CD4-positive, alpha-beta memory T cell (primary cell): ENCODE measurements at regions of chr17 and their contacts with region 1.

Region 1: DNA sequence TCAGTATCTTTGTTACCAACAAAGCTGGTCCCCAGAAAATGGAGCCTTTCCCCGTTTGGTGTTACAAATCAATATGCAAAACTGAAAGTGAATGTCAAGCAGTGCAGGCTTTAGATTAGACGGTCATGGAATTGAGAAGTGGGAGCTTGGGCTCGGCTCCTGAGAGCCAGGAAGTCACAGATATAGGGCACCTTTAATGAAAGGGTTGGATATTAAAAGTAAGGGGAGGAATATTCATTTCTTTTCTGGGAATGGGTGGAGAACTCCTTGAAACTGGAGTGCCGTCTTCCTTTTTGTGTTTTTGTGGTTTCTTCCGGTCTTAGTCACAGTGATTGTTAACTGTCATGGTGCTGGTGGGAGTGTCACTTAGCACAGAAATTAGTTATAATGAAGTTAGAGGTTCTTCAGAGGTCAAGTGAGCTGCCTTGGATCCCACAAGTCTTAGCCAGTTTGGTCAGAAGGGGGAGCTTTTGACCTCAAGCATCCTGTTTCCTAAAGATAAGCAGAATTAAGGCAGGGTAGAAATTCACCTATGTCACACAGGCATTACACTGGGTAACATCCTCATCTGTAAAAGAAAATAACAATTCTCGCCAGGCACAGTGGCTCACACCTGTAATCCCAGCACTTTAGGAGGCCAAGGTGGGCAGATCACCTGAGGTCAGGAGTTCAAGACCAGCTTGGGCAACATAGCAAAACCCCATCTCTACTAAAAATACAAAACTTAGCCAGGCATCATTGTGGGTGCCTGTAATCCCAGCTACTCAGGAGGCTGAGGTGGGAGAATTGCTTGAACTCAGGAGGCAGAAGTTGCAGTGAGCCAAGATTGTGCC is 9.6 kb upstream of the EIF1 start:
- DNase-seq: peak; percentile 78 to 90 (median 83)
- H3K4me3 ChIP-seq: peak overlapping the region; percentile 32 to 51
- H3K4me3 Mint-ChIP-seq: peak overlapping the region; percentile 84 to 96 (median 90)
- H3K27ac ChIP-seq: peak overlapping the region; percentile 59
- H3K27ac Mint-ChIP-seq: peak overlapping the region; percentile 91 to 99 (median 97)
- H3K4me1 ChIP-seq: peaks cover 37% of the 10 kb centered on the region
- H3K4me1 Mint-ChIP-seq: peaks cover 16 to 33% (median 27%) of the 10 kb centered on the region in 4 donors
- H3K27me3 ChIP-seq: no peaks in the 10 kb centered on the region
- H3K27me3 Mint-ChIP-seq: no peaks in the 10 kb centered on the region

Region 2: DNA sequence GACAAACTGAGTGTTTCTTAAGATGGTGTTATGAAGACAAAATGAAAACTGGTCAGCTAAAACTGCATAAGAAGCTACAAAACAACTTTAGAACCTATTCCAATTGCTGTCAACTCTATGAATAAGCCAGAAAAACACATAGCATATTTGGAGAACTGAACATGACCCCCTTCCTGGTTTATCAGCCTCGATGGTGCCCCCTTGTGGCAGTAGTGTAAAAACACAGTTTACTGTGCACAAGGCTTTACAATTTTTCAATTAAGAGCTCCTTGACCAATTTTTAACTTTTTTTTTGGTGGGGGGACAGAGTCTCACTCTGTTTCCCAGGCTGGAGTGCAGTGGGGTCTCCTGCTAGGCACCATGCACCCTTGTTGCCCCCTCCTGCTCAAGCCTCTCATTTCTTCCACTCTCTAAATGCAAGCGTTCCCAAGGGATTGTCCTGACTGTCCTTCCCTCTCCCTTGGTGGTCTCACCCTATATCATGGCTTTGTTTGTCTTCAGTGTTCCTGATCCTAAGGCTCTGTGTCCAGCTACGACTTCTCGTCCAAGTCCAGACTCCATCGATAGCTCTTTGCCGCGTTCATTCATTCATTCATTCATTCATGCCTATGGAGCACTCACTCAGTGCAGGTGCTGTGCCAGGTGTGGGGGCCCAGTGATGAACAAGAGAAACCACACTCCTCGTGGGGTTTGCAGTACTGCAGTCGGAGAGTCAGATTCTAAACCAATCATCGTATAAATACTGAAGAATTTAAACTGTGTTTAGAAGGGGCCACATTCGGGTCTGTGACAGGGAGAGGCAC is 17.0 kb after region 1 on chr17:
- CTCF ChIA-PET with region 1: interaction called, 102 read pairs
- POLR2A ChIA-PET with region 1: interaction called, 576 read pairs
- intact Hi-C with region 1: loop called (anchors 1 kb)
- DNase-seq: peak; percentile 76 to 83 (median 76)
- H3K4me3 ChIP-seq: no peak overlapping the region
- H3K4me3 Mint-ChIP-seq: peak overlapping the region in 2 of 8 donors; percentile 45 to 46
- H3K27ac ChIP-seq: no peak overlapping the region
- H3K27ac Mint-ChIP-seq: peak overlapping the region; percentile 34 to 85 (median 70)
- H3K4me1 ChIP-seq: peaks cover 15% of the 10 kb centered on the region
- H3K4me1 Mint-ChIP-seq: peaks cover 13 to 37% (median 23%) of the 10 kb centered on the region in 4 donors
- H3K27me3 ChIP-seq: no peaks in the 10 kb centered on the region
- H3K27me3 Mint-ChIP-seq: peaks cover 0 to 2% of the 10 kb centered on the region in 2 donors